ENCODE measurements at regions of chr7 and their contacts with region 1.

Region 1: GRCh38 chr7:81956520-81956919 is 186.7 kb upstream of the HGF start:
- DNase-seq: peak; percentile 9
- H3K4me3 Mint-ChIP-seq: no peak overlapping the region
- H3K27ac Mint-ChIP-seq: no peak overlapping the region
- H3K4me1 Mint-ChIP-seq: no peaks in the 10 kb centered on the region
- H3K27me3 Mint-ChIP-seq: no peaks in the 10 kb centered on the region
- CTCF ChIP-seq: no peak

Region 2: GRCh38 chr7:81715984-81716588 is 240.4 kb before region 1 on chr7:
- CTCF ChIA-PET with region 1: no interaction called
- intact Hi-C with region 1: loop called (anchors 1 kb)
- DNase-seq: peak; percentile 18
- H3K4me3 Mint-ChIP-seq: no peak overlapping the region
- H3K27ac Mint-ChIP-seq: no peak overlapping the region
- H3K4me1 Mint-ChIP-seq: no peaks in the 10 kb centered on the region
- H3K27me3 Mint-ChIP-seq: no peaks in the 10 kb centered on the region
- CTCF ChIP-seq: peak; percentile 41